ENCODE measurements at regions of chr2 and their contacts with region 1.

Region 1: GRCh38 chr2:95345566-95346230 is 48.6 kb downstream of the KCNIP3 start:
- DNase-seq: peak; percentile 88
- CTCF ChIP-seq: peak; percentile 93

Region 2: GRCh38 chr2:95231723-95232122 is 114.0 kb before region 1 on chr2:
- CTCF ChIA-PET with region 1: interaction called, 11 read pairs
- POLR2A ChIA-PET with region 1: no interaction called
- DNase-seq: peak; percentile 47
- CTCF ChIP-seq: peak; percentile 55

Region 3: DNA sequence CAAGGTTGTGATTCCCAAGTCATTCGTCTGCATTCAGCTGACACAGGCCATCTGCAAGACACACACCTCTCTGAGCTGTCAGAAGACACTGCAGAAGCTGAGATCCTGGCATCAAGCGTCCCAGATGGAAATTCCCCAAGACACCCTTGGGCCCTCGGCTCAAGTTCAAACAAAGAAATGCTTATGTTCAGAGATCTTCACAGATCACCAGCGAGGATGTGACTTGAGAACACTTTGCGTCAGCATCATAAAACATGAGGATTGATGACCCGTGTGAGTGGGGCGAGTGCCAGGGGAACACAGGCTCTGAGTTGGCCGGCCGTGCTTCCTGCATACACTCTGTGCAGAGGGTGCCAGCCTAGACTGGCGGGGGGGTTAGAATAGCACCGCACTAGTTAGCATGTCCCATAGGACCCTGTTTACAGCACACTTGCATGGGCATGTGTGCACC is 11.8 kb before region 1 on chr2:
- CTCF ChIA-PET with region 1: interaction called, 18 read pairs
- POLR2A ChIA-PET with region 1: no interaction called
- DNase-seq: no peak
- CTCF ChIP-seq: no peak

Region 4: GRCh38 chr2:95359031-95359430 is 13.3 kb after region 1 on chr2:
- CTCF ChIA-PET with region 1: interaction called, 27 read pairs
- POLR2A ChIA-PET with region 1: no interaction called
- DNase-seq: no peak
- CTCF ChIP-seq: no peak

Region 5: DNA sequence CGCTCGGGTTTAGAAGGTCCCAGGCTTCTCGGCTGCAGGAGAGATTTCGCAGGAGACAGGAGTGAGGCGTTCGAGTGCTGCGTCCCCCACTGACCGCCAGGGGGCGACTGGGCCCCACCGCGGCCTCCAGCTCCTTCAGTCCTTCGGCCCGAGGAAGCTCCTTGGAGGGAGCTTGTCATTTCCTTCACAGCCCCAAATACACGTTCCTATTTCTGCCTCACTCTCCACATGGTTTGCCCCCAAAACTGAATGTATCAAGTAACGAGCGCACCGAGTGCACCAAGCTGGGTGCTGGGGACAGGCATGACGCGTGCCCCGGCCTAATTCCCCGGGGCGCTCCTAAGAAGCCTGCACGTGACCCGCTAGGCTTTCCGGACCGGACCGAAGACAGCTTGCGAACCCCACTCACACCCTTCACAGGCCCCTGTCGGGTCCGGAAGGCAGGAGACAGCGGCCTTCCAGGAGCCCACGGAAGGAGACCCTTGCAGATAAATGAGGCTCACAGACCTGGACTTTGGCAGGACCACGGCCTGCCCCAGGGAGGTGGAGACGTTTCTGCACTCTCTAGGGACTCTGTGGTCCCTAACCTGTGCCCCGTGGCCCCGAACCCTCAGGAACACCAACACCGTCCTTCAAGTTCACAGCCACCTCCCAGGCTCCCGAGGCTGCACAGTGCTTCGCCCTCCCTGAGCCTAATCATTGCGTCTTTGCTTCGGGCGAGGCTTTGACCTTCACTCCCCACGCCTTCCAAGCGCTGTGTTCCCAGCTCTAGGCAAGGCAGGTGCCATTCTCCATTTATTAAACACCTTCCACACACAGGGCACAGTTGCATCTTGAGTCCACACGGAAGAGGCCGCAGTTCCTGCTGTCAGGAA is 43.8 kb after region 1 on chr2:
- CTCF ChIA-PET with region 1: interaction called, 10 read pairs
- POLR2A ChIA-PET with region 1: no interaction called
- DNase-seq: peak; percentile 85
- CTCF ChIP-seq: peak; percentile 87

Region 6: DNA sequence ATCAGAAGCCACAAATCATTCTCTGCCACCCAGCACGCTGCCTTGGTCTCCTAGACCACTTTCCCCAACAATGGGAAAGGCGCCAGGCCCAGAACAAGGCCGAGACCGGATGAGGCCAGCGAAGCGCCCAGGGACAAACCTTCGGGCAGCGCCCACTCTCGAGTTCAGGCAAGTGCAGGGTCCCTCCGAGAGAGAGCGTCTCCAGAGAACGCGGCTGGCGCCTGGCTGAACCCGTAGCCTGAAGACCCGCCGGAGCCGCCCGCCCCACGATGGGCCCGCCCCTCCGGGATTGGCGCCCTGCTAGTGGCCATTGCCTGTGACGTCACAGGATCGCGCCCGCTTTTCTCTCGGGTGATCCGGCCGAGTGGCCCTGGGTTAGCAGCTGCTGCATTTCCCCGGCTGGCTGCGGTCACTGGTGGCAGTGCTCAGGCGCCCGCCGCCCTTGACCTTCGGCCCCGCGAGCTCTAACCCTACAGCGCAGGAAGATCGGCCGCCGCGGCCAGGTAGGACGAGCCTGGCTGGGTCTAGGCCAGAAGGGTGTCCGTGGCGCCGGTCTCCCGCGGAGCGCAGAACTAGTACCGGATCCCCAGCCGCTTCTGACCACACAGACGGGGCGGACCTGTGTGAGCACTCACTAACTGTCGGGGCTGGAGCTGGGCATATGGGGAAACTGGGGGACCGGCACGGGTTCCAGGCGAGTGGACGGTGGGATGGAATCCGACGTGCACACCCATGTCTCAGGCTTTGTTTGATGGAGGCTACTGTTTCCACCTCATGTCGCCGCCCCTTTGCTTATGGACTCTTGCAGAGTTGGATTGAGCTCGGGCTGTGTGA is 56.9 kb after region 1 on chr2 and contains the start of gene FAHD2A:
- CTCF ChIA-PET with region 1: interaction called, 12 read pairs
- POLR2A ChIA-PET with region 1: no interaction called
- DNase-seq: peak; percentile 99
- CTCF ChIP-seq: no peak

Region 7: GRCh38 chr2:95709831-95710230 is 364.1 kb after region 1 on chr2:
- CTCF ChIA-PET with region 1: no interaction called
- POLR2A ChIA-PET with region 1: no interaction called
- DNase-seq: no peak
- CTCF ChIP-seq: no peak